Activated T-helper 2 cell treated with anti-CD3 and anti-CD28 coated beads, Interferon-gamma antibody, Interleukin-2, Interleukin-4, amounts not matched to agents 10 μg/mL and 5 μg/mL and 100 μg/mL, durations not matched to agents 14 hours and 24 hours and 36 hours (primary cell): ENCODE measurements at regions of chr18 and their contacts with region 1.

Region 1: DNA sequence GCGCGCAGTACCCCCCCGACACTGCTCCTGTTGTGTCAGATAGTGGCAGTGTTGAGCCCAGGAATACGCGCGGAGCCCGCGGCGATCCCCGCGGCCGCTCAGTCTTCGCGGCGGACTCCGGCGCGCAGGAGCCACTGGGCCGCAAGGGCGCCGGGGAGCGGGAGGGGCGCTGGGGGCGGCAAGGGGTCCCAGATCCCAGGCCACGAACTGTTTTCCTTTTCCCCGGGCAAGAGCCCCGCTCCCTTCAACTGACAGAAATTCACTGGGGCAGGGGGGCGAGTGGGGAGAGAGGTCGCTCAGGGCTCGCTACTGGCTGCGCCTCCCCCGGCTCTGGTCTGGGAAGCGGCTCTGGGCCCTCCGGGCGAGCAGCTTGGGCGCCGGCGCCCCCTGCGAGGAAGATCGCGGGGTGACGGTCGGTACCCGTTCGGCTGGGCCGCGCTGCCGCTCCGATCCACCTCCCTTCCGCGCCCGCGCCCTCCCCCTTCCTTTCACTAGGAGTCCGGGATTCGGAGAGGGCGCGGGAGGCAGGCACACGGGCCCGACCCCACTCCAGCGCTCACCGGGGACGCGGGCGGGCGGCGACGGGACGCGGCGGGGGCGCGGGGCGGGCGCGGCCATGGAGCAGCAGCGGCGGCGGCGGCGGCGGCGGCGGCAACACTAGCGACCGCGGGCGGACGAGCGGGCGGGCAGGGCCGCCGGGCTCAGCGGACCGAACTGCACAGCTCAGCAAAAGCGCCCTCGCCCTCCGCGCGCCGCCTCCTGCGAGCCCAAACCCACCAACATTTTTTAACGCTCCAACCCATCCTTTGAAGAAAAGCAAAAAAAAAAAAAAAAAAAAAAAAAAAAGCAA is 1.4 kb upstream of the SETBP1 start:
- DNase-seq: peak; percentile 73
- H3K4me3 Mint-ChIP-seq: peak overlapping the region; percentile 75
- H3K27ac Mint-ChIP-seq: peak overlapping the region; percentile 48
- H3K4me1 Mint-ChIP-seq: peaks cover 13% of the 10 kb centered on the region
- H3K27me3 Mint-ChIP-seq: peaks cover 25% of the 10 kb centered on the region

Region 2: GRCh38 chr18:44725300-44726096 is 46.2 kb after region 1 on chr18:
- intact Hi-C with region 1: loop called (anchors 1 kb)
- DNase-seq: peak; percentile 66
- H3K4me3 Mint-ChIP-seq: peak overlapping the region; percentile 19
- H3K27ac Mint-ChIP-seq: peak overlapping the region; percentile 83
- H3K4me1 Mint-ChIP-seq: peaks cover 90% of the 10 kb centered on the region
- H3K27me3 Mint-ChIP-seq: no peaks in the 10 kb centered on the region

Region 3: DNA sequence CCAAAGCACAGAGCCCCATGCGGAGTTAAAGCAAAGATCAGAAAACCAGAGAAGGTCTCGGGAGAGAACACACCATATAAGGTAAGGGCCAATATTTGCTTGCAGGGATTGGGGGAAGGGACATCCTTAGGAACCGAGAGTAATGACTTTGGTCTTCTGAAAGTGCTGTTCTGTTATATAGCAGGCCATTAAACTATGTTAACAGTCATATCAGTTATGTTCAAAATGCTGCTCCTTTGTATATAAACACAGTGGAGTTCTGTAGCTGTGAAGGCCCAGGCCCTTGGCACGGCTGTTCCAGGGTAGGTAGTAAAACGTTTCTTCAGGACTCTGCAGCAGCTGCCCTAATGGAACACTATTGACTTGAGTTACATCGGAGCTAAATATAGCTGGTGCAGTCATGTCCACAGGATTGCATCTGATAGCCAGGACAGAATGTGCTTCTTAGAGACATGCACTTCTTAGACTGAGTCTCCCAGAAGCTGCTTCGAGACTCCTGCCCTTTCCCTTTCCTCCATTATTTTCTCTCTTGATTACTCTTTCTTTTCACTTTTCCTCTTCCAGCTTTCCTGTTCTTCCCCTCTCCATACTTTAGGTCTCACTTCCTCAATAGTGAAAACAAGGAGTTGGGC is 123.9 kb after region 1 on chr18:
- intact Hi-C with region 1: loop called (anchors 2 kb)
- DNase-seq: no peak
- H3K4me3 Mint-ChIP-seq: no peak overlapping the region
- H3K27ac Mint-ChIP-seq: no peak overlapping the region
- H3K4me1 Mint-ChIP-seq: peaks cover 61% of the 10 kb centered on the region
- H3K27me3 Mint-ChIP-seq: no peaks in the 10 kb centered on the region

Region 4: DNA sequence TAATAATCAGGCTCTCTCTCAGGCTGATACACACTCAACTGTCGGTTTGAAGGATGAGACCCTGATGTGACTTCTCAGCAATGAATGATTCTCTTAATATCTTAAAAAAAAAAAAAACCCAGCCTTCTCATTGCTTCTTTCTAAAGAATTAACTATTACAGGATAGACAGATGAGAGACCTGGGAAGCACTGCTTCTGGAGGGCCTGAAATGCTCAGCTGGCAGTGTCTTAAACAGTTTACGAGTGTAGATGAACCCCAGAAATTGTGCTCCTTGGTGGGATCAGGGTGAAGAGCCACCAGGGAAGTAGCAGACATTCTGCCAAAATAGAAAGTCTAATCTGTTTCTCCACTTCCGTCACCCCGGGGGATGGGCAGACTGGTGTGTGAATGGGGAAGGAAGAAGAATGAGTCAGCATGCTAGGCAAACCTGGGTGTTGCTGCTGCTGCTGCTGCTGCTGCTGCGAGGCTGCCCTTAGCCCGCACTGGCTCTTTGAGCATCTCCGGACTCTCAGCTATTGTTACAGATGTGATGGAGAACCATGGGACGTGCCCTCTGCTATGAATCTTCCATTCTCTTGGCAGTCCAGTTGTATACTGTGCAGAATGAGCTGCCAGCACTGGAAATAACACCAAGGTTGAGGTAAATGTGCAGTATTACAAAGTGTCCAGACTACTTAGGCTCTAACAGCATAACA is 159.8 kb after region 1 on chr18:
- intact Hi-C with region 1: loop called (anchors 5 kb)
- DNase-seq: peak; percentile 62
- H3K4me3 Mint-ChIP-seq: no peak overlapping the region
- H3K27ac Mint-ChIP-seq: peak overlapping the region; percentile 5
- H3K4me1 Mint-ChIP-seq: peaks cover 39% of the 10 kb centered on the region
- H3K27me3 Mint-ChIP-seq: no peaks in the 10 kb centered on the region

Region 5: GRCh38 chr18:44870631-44871502 is 191.6 kb after region 1 on chr18:
- intact Hi-C with region 1: no loop called
- DNase-seq: no peak
- H3K4me3 Mint-ChIP-seq: no peak overlapping the region
- H3K27ac Mint-ChIP-seq: no peak overlapping the region
- H3K4me1 Mint-ChIP-seq: peaks cover 12% of the 10 kb centered on the region
- H3K27me3 Mint-ChIP-seq: no peaks in the 10 kb centered on the region

Region 6: DNA sequence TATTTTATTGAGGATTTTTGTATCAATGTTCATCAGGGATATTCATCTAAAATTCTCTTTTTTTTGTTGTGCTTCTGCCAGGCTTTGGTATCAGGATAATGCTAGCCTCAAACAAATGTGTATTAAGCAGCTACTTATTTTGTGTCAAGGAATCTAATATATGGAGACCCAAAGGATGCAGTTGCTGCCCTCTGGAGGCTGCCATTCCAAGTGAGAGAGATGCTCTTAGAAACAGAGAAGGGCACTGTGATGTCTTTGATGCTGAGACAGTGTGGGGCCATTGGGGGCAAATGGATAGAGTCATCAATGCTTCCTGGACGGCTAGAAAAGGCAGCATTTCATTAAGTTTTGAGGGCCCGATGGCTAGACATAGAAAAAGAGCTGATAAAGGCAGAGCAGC is 294.0 kb after region 1 on chr18:
- intact Hi-C with region 1: loop called (anchors 5 kb)
- DNase-seq: no peak
- H3K4me3 Mint-ChIP-seq: no peak overlapping the region
- H3K27ac Mint-ChIP-seq: no peak overlapping the region
- H3K4me1 Mint-ChIP-seq: peaks cover 4% of the 10 kb centered on the region
- H3K27me3 Mint-ChIP-seq: no peaks in the 10 kb centered on the region